Natural killer cell (primary cell): ENCODE measurements at regions of chr1 and their contacts with region 1.

Region 1: DNA sequence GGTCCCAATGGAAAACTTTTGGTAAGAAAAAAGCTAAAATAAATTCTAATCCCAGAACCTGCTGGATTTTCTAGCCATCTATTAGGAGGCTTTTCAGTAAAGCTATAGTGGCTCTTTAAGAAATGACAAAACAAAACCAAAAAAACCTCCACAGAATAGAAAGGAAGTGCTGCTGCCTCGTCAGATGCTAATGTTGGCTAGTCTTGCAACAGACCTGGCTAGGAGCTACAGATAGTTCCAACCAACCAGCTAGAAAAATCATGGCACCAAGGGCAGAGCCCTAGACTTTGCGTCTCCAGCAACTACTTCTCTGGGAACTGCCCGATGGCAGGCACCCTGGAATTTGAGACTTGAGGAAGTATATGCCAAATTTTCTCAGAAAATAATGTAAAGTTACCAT is 7.6 kb downstream of the CD101 start:
- DNase-seq: peak in 1 of 2 donors; percentile 49
- ATAC-seq: peak in 1 of 3 donors; percentile 53
- H3K4me3 ChIP-seq: no peak overlapping the region
- H3K4me3 Mint-ChIP-seq: no peak overlapping the region
- H3K27ac ChIP-seq: no peak overlapping the region
- H3K27ac Mint-ChIP-seq: no peak overlapping the region
- H3K4me1 ChIP-seq: peaks cover 2% of the 10 kb centered on the region
- H3K4me1 Mint-ChIP-seq: peaks cover 4 to 14% of the 10 kb centered on the region in 2 donors
- H3K27me3 ChIP-seq: no peaks in the 10 kb centered on the region
- H3K27me3 Mint-ChIP-seq: peaks cover 6 to 7% of the 10 kb centered on the region in 2 donors
- CTCF ChIP-seq: no peak

Region 2: GRCh38 chr1:116943438-116943837 is 65.7 kb before region 1 on chr1:
- intact Hi-C with region 1: no loop called
- DNase-seq: no peak
- ATAC-seq: no peak
- H3K4me3 ChIP-seq: no peak overlapping the region
- H3K4me3 Mint-ChIP-seq: no peak overlapping the region
- H3K27ac ChIP-seq: no peak overlapping the region
- H3K27ac Mint-ChIP-seq: no peak overlapping the region
- H3K4me1 ChIP-seq: no peaks in the 10 kb centered on the region
- H3K4me1 Mint-ChIP-seq: peaks cover 0 to 6% of the 10 kb centered on the region in 2 donors
- H3K27me3 ChIP-seq: no peaks in the 10 kb centered on the region
- H3K27me3 Mint-ChIP-seq: peaks cover 0 to 3% of the 10 kb centered on the region in 2 donors
- CTCF ChIP-seq: no peak

Region 3: GRCh38 chr1:117045644-117046043 is 36.5 kb after region 1 on chr1:
- intact Hi-C with region 1: loop called (anchors 5 kb)
- DNase-seq: no peak
- ATAC-seq: no peak
- H3K4me3 ChIP-seq: no peak overlapping the region
- H3K4me3 Mint-ChIP-seq: no peak overlapping the region
- H3K27ac ChIP-seq: no peak overlapping the region
- H3K27ac Mint-ChIP-seq: no peak overlapping the region
- H3K4me1 ChIP-seq: peaks cover 9% of the 10 kb centered on the region
- H3K4me1 Mint-ChIP-seq: peaks cover 10 to 14% of the 10 kb centered on the region in 2 donors
- H3K27me3 ChIP-seq: no peaks in the 10 kb centered on the region
- H3K27me3 Mint-ChIP-seq: no peaks in the 10 kb centered on the region
- CTCF ChIP-seq: no peak